ENCODE measurements at regions of chr22 and their contacts with region 1.

Region 1: GRCh38 chr22:17319546-17319945 is 49.7 kb upstream of the CECR2 start:
- DNase-seq: no peak
- H3K27ac ChIP-seq: no peak overlapping the region
- CTCF ChIP-seq: no peak

Region 2: DNA sequence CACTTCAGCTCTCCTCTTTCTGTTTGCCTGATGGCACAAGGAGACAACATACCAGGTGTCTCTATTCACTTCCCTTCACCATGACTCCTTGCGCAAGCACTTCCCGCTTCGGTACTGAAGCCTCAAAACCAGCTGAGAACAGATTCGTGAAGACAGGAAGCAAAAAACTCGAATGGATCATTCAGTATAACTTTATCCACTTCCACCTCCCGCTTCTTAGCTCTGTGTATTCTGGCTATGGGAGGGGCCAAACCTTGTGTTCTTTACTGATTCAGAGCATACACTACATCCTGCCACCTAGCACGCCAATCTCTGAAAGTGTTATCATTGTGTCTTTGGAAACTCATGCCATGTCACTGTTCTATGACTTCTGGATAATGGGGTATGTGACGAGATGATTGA is 38.1 kb before region 1 on chr22:
- CTCF ChIA-PET with region 1: no interaction called
- POLR2A ChIA-PET with region 1: no interaction called
- DNase-seq: no peak
- H3K27ac ChIP-seq: no peak overlapping the region
- CTCF ChIP-seq: no peak

Region 3: GRCh38 chr22:17303840-17304779 is 15.4 kb before region 1 on chr22:
- CTCF ChIA-PET with region 1: interaction called, 11 read pairs
- POLR2A ChIA-PET with region 1: no interaction called
- DNase-seq: no peak
- H3K27ac ChIP-seq: no peak overlapping the region
- CTCF ChIP-seq: no peak

Measured in RWPE1 (cell line).